ENCODE measurements at regions of chr17 and their contacts with region 1.

Region 1: DNA sequence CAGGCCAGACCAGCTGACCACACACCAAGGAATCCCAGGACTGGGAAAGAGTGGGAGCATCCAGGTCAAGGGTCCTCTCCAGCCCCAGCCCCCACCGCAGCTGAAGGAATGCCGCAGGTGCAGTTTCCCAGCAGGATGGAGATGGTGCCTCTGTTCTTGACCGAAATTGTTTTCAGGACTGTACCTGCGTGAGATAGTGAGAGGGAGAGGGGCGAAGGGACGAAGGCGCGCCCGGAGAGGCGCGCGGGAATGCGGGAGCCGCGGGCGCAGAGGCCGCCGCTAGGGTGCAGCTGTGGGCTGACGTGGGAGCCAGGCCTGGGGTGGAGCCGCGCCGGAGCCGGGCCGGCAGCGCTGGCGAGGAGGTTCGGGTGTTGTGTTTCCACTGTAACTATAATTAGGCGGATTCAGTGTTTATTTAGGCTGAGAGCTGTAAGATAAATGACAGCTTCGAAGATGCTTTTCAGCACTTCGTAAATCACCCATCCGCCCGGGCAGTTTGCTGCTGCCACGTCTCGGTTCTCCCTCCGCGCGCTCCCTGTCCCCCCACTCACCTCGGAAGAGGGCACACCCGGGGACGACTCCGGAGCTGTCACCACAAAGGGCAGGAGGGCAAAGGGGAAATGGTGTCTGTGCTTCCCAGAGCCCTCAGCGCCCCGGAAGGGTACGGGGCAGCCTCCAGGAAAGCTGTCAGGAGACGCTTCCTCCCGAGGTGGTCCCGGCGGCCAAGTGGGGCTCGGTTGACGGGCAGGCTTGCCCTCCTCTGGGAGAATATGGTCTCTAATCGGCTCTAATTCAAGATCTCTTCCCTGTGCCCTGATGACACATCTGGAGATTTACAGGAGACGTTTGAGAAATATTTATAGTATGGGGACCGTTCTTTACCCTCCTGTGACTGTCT is 38.2 kb downstream of the HOXB1 start:
- DNase-seq: peak; percentile 75
- H3K4me3 Mint-ChIP-seq: peak overlapping the region; percentile 60
- H3K27ac Mint-ChIP-seq: peak overlapping the region; percentile 50
- H3K4me1 Mint-ChIP-seq: peaks cover 47% of the 10 kb centered on the region
- H3K27me3 Mint-ChIP-seq: peaks cover 17% of the 10 kb centered on the region

Region 2: DNA sequence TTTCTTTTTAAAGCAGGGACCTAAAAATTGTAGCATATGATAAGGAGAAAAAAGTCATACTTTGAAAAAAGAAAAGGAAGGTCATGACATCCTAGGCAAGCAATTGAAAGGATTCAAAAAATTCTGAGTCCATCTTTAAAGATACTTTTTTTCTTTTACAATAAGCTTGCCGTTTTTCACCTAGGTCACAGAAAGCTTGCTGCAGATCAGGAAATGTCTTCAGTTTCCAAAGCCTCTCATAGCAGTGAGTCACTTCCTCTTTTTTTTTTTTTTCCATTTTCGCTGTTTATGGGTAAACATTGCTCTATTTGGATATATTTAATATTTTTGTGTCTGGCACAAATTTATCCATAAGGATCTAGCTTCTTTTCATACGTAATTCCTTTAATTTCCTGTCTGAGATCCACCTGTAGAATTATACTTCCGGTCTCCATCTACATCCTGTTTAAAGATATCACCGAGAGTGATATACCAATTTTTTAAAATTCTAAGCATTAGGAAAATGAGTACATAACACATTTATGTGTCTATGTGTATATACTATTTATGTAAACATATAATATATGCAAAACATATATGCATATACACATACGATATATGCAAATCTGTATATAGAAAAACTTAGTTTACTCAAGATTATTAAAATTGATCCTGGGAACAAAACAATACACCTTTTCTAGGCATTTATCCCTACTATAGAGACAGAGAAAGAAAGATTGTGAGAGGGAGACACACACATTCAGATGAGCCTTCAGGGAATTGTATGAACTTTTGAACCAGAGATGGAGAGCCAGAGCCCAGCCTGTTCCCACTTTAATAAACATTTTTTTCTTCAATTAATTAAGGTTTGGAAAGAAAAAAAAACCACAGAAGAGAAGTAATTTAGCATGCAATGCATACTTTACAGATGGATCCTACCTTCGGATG is 197.0 kb before region 1 on chr17:
- CTCF ChIA-PET with region 1: no interaction called
- POLR2A ChIA-PET with region 1: no interaction called
- DNase-seq: no peak
- H3K4me3 Mint-ChIP-seq: peak overlapping the region; percentile 72
- H3K27ac Mint-ChIP-seq: peak overlapping the region; percentile 92
- H3K4me1 Mint-ChIP-seq: peaks cover 56% of the 10 kb centered on the region
- H3K27me3 Mint-ChIP-seq: no peaks in the 10 kb centered on the region

Region 3: GRCh38 chr17:48351831-48352332 is 140.8 kb before region 1 on chr17:
- CTCF ChIA-PET with region 1: interaction called, 31 read pairs
- POLR2A ChIA-PET with region 1: no interaction called
- DNase-seq: no peak
- H3K4me3 Mint-ChIP-seq: no peak overlapping the region
- H3K27ac Mint-ChIP-seq: no peak overlapping the region
- H3K4me1 Mint-ChIP-seq: peaks cover 11% of the 10 kb centered on the region
- H3K27me3 Mint-ChIP-seq: no peaks in the 10 kb centered on the region

Region 4: GRCh38 chr17:48505787-48506645 is 13.4 kb after region 1 on chr17:
- CTCF ChIA-PET with region 1: interaction called, 22 read pairs
- POLR2A ChIA-PET with region 1: interaction called, 6 read pairs
- DNase-seq: peak; percentile 74
- H3K4me3 Mint-ChIP-seq: no peak overlapping the region
- H3K27ac Mint-ChIP-seq: peak overlapping the region; percentile 71
- H3K4me1 Mint-ChIP-seq: peaks cover 49% of the 10 kb centered on the region
- H3K27me3 Mint-ChIP-seq: peaks cover 14% of the 10 kb centered on the region

Region 5: GRCh38 chr17:48543107-48543853 is 50.6 kb after region 1 on chr17:
- CTCF ChIA-PET with region 1: interaction called, 24 read pairs
- POLR2A ChIA-PET with region 1: interaction called, 10 read pairs
- DNase-seq: peak; percentile 69
- H3K4me3 Mint-ChIP-seq: peak overlapping the region; percentile 89
- H3K27ac Mint-ChIP-seq: peak overlapping the region; percentile 95
- H3K4me1 Mint-ChIP-seq: peaks cover 55% of the 10 kb centered on the region
- H3K27me3 Mint-ChIP-seq: peaks cover 32% of the 10 kb centered on the region

Region 6: GRCh38 chr17:48678141-48678971 is 185.7 kb after region 1 on chr17:
- CTCF ChIA-PET with region 1: no interaction called
- POLR2A ChIA-PET with region 1: no interaction called
- DNase-seq: peak; percentile 71
- H3K4me3 Mint-ChIP-seq: no peak overlapping the region
- H3K27ac Mint-ChIP-seq: no peak overlapping the region
- H3K4me1 Mint-ChIP-seq: no peaks in the 10 kb centered on the region
- H3K27me3 Mint-ChIP-seq: peaks cover 53% of the 10 kb centered on the region

Measured in activated CD4-positive, alpha-beta memory T cell treated with anti-CD3 and anti-CD28 coated beads, Interleukin-2, amount 10 ng/mL, durations not matched to agents 7 days and 5 days (primary cell).